HCT116 (cell line): ENCODE measurements at regions of chr3 and their contacts with region 1.

Region 1: GRCh38 chr3:9352917-9353752 is 9.7 kb upstream of the THUMPD3 start:
- DNase-seq: peak; percentile 21
- ATAC-seq: peak; percentile 88
- H3K4me3 ChIP-seq: no peak overlapping the region
- H3K27ac ChIP-seq: no peak overlapping the region
- H3K4me1 ChIP-seq: peaks cover 17 to 29% of the 10 kb centered on the region in 2 experiments; a peak in 3 of 4 replicates
- H3K27me3 ChIP-seq: no peaks in the 10 kb centered on the region
- CTCF ChIP-seq: peak; percentile 68 to 95 (median 86); a peak in 5 of 6 replicates
- POLR2A ChIP-seq: no peak
- RAD21 ChIP-seq: peak; percentile 93

Region 2: GRCh38 chr3:9384141-9384853 is 31.2 kb after region 1 on chr3:
- CTCF ChIA-PET with region 1: no interaction called
- POLR2A ChIA-PET with region 1: no interaction called
- RAD21 ChIA-PET with region 1: no interaction called
- intact Hi-C with region 1: no loop called
- DNase-seq: no peak
- ATAC-seq: no peak
- H3K4me3 ChIP-seq: no peak overlapping the region
- H3K27ac ChIP-seq: no peak overlapping the region
- H3K4me1 ChIP-seq: no peaks in the 10 kb centered on the region
- H3K27me3 ChIP-seq: no peaks in the 10 kb centered on the region
- CTCF ChIP-seq: no peak
- POLR2A ChIP-seq: no peak
- RAD21 ChIP-seq: no peak

Region 3: DNA sequence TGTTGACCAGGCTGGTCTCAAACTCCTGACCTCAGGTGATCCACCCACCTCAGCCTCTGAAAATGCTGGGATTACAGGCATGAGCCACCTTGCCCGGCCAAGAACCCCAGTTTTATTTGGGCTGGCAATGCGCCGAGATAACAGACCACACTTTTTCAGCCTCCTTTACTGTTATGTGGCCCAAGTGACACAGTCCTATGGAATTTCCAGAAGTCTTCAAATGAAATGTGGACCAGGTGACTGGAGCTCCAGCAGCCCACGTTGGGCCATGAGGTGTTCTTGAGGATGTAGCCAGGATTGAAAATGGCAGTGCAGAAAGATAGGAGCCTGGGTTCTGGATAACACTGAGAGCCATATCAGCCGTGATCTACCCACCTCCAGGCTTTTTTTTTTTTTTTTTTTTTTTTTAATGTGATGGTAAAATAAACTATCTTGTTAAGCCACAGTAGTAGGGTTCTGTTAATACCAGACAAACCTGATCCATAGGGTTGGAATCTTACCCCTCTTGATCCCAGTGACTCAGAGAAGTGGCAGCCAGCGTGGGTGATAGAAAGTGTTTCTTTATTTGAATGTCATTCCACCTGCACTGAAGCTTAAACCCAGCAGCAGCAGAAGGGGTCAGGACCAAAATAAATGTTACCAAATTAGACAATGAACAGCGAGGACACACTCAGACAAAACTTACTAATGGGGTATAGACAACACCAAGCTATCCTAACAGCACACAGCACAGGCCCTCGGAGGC is 144.9 kb after region 1 on chr3:
- CTCF ChIA-PET with region 1: interaction called, 6 read pairs
- POLR2A ChIA-PET with region 1: interaction called, 4 read pairs
- RAD21 ChIA-PET with region 1: no interaction called
- intact Hi-C with region 1: loop called (anchors 5 kb)
- DNase-seq: peak; percentile 33
- ATAC-seq: peak; percentile 63
- H3K4me3 ChIP-seq: peak overlapping the region in 1 of 2 experiments; percentile 30; a peak in 2 of 4 replicates
- H3K27ac ChIP-seq: peak overlapping the region; percentile 52; the same call in 1 of the 2 replicates
- H3K4me1 ChIP-seq: peaks cover 30 to 44% of the 10 kb centered on the region in 2 experiments
- H3K27me3 ChIP-seq: no peaks in the 10 kb centered on the region
- CTCF ChIP-seq: no peak
- POLR2A ChIP-seq: no peak
- RAD21 ChIP-seq: no peak

Region 4: GRCh38 chr3:9649791-9650521 is 296.8 kb after region 1 on chr3:
- CTCF ChIA-PET with region 1: no interaction called
- POLR2A ChIA-PET with region 1: no interaction called
- RAD21 ChIA-PET with region 1: no interaction called
- intact Hi-C with region 1: loop called (anchors 10 kb)
- DNase-seq: no peak
- ATAC-seq: peak; percentile 7
- H3K4me3 ChIP-seq: peak overlapping the region; percentile 92 to 98
- H3K27ac ChIP-seq: peak overlapping the region; percentile 44; the same call in 1 of the 2 replicates
- H3K4me1 ChIP-seq: peaks cover 5 to 14% of the 10 kb centered on the region in 2 experiments; a peak in 3 of 4 replicates
- H3K27me3 ChIP-seq: no peaks in the 10 kb centered on the region
- CTCF ChIP-seq: no peak
- POLR2A ChIP-seq: no peak
- RAD21 ChIP-seq: no peak